ENCODE measurements at regions of chrX and their contacts with region 1.

Region 1: DNA sequence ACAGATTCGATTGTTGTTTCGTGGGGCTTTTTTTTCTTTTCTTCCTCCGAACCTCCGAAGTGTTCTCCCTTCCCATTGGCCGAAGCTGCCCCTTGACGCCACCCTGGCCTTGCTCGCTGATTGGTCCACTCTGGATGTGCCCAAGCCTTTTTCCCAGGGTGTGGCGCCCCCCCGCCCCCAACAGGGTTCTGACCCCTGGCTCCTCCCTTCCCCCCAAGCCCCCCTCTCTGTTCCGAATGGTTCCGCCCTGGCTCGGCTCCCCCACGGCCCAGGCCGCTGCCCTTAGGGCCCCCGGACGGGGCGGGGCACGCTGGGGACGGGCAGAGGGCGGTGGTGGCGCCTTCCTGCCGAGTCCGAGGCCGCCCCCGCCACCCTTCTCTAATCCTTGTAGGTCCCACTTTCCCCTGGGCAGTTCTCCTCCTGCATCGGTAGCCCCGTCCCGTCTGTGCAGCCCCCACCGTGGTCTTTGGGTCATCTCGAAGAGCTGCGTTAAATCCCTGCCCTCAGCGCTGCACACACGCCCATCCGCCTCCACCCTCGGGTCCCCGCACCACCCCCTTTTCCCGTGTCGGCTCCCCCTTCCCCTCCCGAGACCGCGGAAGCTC is 25.5 kb downstream of the UTP14A start:
- DNase-seq: peak in 34 of 35 experiments; percentile 11 to 69 (median 30)
- ATAC-seq: peak; percentile 35 to 58 (median 40)
- H3K4me3 ChIP-seq: peak overlapping the region; percentile 47 to 70
- H3K4me3 Mint-ChIP-seq: peak overlapping the region; percentile 72 to 78 (median 76)
- H3K27ac ChIP-seq: peak overlapping the region; percentile 68
- H3K27ac Mint-ChIP-seq: peak overlapping the region; percentile 86 to 89
- H3K4me1 ChIP-seq: peaks cover 0 to 8% of the 10 kb centered on the region in 2 experiments
- H3K4me1 Mint-ChIP-seq: peaks cover 0 to 7% (median 4%) of the 10 kb centered on the region in 3 donors
- H3K27me3 ChIP-seq: no peaks in the 10 kb centered on the region
- H3K27me3 Mint-ChIP-seq: peaks cover 0 to 4% of the 10 kb centered on the region in 2 donors

Region 2: DNA sequence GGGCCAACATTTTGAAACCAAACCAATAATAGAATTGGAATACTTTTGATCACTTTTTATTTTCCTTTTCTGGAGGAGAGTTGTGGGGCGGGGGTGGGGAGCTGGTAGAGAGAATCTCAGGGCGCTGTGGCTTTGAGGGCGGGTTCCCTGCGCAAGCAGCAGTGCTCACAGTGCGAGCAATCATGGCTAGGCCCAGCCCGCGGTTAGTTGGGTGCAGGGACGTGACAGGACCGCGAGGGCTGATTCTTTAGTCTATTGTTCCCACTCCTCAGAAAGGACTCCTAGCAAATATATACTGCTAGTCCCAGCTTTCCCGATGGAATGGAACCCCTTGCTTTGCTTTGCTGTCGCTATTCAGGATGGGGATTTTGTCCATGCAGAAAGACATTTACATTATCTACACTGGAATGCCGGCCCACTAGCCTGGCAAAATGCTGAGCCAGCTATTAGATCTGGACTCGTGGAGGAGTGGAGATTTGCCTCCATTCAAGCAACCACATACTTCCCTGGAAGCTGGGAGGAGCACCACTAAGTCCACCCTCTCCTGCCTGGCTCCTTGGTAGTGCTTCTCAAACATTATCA is 252.8 kb before region 1 on chrX:
- CTCF ChIA-PET with region 1: no interaction called
- POLR2A ChIA-PET with region 1: no interaction called
- DNase-seq: peak in 29 of 35 experiments; percentile 19 to 57 (median 34)
- ATAC-seq: peak; percentile 70 to 77 (median 74)
- H3K4me3 ChIP-seq: peak overlapping the region; percentile 44 to 49
- H3K4me3 Mint-ChIP-seq: peak overlapping the region; percentile 55 to 71 (median 56)
- H3K27ac ChIP-seq: peak overlapping the region; percentile 43
- H3K27ac Mint-ChIP-seq: peak overlapping the region; percentile 68 to 81
- H3K4me1 ChIP-seq: peaks cover 5 to 21% of the 10 kb centered on the region in 2 experiments
- H3K4me1 Mint-ChIP-seq: peaks cover 7 to 27% (median 12%) of the 10 kb centered on the region in 3 donors
- H3K27me3 ChIP-seq: no peaks in the 10 kb centered on the region
- H3K27me3 Mint-ChIP-seq: peaks cover 0 to 24% of the 10 kb centered on the region in 2 donors

Region 3: DNA sequence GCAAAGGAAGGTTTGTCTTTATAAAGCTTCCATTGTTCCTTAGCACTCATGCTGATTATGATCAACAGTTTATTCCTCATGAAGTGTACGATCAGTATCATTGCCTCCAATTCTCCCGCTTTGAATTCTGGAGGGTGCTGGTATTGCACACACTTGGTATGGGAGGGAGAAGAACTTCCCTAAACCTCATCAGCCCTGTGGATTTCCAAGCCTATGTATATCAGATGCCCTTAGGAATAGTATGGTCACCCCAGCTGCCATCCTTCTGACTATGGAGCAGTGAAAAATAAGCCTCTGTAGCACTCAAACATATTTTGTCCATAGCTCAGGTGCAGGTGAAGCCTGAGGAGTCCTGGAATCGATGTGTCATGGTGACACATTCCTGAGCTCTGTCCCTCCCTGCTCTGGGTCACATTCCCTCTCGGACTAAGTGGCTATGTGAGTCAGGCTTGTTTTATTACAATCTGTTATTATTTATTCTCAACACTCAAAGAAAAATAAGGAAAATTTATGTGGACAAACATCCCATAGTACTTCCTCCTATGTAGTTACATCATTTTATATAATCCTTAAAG is 85.8 kb before region 1 on chrX:
- CTCF ChIA-PET with region 1: no interaction called
- POLR2A ChIA-PET with region 1: no interaction called
- DNase-seq: no peak
- ATAC-seq: no peak
- H3K4me3 ChIP-seq: no peak overlapping the region
- H3K4me3 Mint-ChIP-seq: no peak overlapping the region
- H3K27ac ChIP-seq: no peak overlapping the region
- H3K27ac Mint-ChIP-seq: no peak overlapping the region
- H3K4me1 ChIP-seq: peaks cover 4 to 11% of the 10 kb centered on the region in 2 experiments
- H3K4me1 Mint-ChIP-seq: peaks cover 10 to 31% (median 25%) of the 10 kb centered on the region in 3 donors
- H3K27me3 ChIP-seq: no peaks in the 10 kb centered on the region
- H3K27me3 Mint-ChIP-seq: peaks cover 0 to 4% of the 10 kb centered on the region in 2 donors

Region 4: DNA sequence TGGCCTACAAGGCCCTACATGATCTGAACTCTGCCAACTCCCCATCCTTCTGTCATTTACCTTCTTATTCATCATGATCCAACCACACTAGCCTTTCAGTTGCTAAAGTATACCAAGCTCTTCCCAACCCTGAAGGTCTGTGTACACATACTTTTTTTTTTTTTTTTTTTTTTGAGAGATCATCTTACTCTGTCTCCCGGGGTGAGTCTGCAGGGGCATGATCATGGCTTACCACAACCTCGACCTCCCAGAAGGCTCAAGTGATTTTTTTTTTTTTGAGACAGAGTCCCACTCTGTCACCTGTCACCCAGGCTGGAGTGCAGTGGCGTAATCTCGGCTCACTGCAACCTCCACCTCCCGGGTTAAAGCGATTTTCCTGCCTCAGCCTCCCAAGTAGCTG is 31.5 kb before region 1 on chrX:
- CTCF ChIA-PET with region 1: no interaction called
- POLR2A ChIA-PET with region 1: no interaction called
- DNase-seq: no peak
- ATAC-seq: no peak
- H3K4me3 ChIP-seq: no peak overlapping the region
- H3K4me3 Mint-ChIP-seq: no peak overlapping the region
- H3K27ac ChIP-seq: no peak overlapping the region
- H3K27ac Mint-ChIP-seq: no peak overlapping the region
- H3K4me1 ChIP-seq: no peaks in the 10 kb centered on the region
- H3K4me1 Mint-ChIP-seq: no peaks in the 10 kb centered on the region
- H3K27me3 ChIP-seq: no peaks in the 10 kb centered on the region
- H3K27me3 Mint-ChIP-seq: peaks cover 0 to 4% of the 10 kb centered on the region in 2 donors

Region 5: GRCh38 chrX:129984141-129984837 is 52.8 kb after region 1 on chrX:
- CTCF ChIA-PET with region 1: interaction called in 1 of 2 experiments, 16 read pairs
- POLR2A ChIA-PET with region 1: no interaction called
- DNase-seq: peak in 14 of 35 experiments; percentile 7 to 63 (median 26)
- ATAC-seq: peak; percentile 9 to 14 (median 12)
- H3K4me3 ChIP-seq: peak overlapping the region; percentile 47 to 55
- H3K4me3 Mint-ChIP-seq: peak overlapping the region in 2 of 3 donors; percentile 76 to 79
- H3K27ac ChIP-seq: no peak overlapping the region
- H3K27ac Mint-ChIP-seq: peak overlapping the region in 1 of 2 donors; percentile 68
- H3K4me1 ChIP-seq: peaks cover 8 to 21% of the 10 kb centered on the region in 2 experiments
- H3K4me1 Mint-ChIP-seq: peaks cover 13 to 27% (median 20%) of the 10 kb centered on the region in 3 donors
- H3K27me3 ChIP-seq: no peaks in the 10 kb centered on the region
- H3K27me3 Mint-ChIP-seq: no peaks in the 10 kb centered on the region